CD4-positive, alpha-beta T cell (primary cell): ENCODE measurements at regions of chr2 and their contacts with region 1.

Region 1: GRCh38 chr2:158456309-158457066 is at the starts of genes CCDC148 and PKP4:
- DNase-seq: peak; percentile 71 to 97 (median 84)
- ATAC-seq: peak; percentile 90
- H3K4me3 ChIP-seq: peak within 1 kb of the TSS; percentile 76
- H3K4me3 Mint-ChIP-seq: peak within 1 kb of the TSS; percentile 99
- H3K27ac ChIP-seq: peak within 1 kb of the TSS; percentile 33 to 47
- H3K27ac Mint-ChIP-seq: peak within 1 kb of the TSS; percentile 84
- H3K4me1 ChIP-seq: peaks cover 15% of the 10 kb centered on the region
- H3K4me1 Mint-ChIP-seq: peaks cover 28% of the 10 kb centered on the region
- H3K27me3 ChIP-seq: no peaks in the 10 kb centered on the region
- H3K27me3 Mint-ChIP-seq: no peaks in the 10 kb centered on the region
- CTCF ChIP-seq: no peak
- total RNA-seq, gene CCDC148: not detected
- total RNA-seq, gene PKP4: 10.8 to 14.6 TPM

Region 2: GRCh38 chr2:159286709-159287441 is 830.4 kb after region 1 on chr2:
- CTCF ChIA-PET with region 1: no interaction called
- POLR2A ChIA-PET with region 1: no interaction called
- intact Hi-C with region 1: loop called in 1 of 2 experiments (anchors 10 kb)
- DNase-seq: peak; percentile 93 to 100 (median 97)
- ATAC-seq: peak; percentile 98
- H3K4me3 ChIP-seq: peak overlapping the region; percentile 88
- H3K4me3 Mint-ChIP-seq: peak overlapping the region; percentile 90
- H3K27ac ChIP-seq: peak overlapping the region in 1 of 2 donors; percentile 69
- H3K27ac Mint-ChIP-seq: peak overlapping the region; percentile 77
- H3K4me1 ChIP-seq: peaks cover 24% of the 10 kb centered on the region
- H3K4me1 Mint-ChIP-seq: peaks cover 46% of the 10 kb centered on the region
- H3K27me3 ChIP-seq: no peaks in the 10 kb centered on the region
- H3K27me3 Mint-ChIP-seq: no peaks in the 10 kb centered on the region
- CTCF ChIP-seq: no peak

Region 3: GRCh38 chr2:159904127-159904958 is 1447.9 kb after region 1 on chr2:
- CTCF ChIA-PET with region 1: no interaction called
- POLR2A ChIA-PET with region 1: interaction called, 3 read pairs
- intact Hi-C with region 1: loop called in 1 of 2 experiments (anchors 5 kb)
- DNase-seq: peak; percentile 64 to 91 (median 80)
- ATAC-seq: peak; percentile 81
- H3K4me3 ChIP-seq: peak within 1 kb of the TSS; percentile 97
- H3K4me3 Mint-ChIP-seq: peak within 1 kb of the TSS; percentile 99
- H3K27ac ChIP-seq: peak within 1 kb of the TSS; percentile 73 to 91
- H3K27ac Mint-ChIP-seq: peak within 1 kb of the TSS; percentile 93
- H3K4me1 ChIP-seq: peaks cover 31% of the 10 kb centered on the region
- H3K4me1 Mint-ChIP-seq: peaks cover 39% of the 10 kb centered on the region
- H3K27me3 ChIP-seq: no peaks in the 10 kb centered on the region
- H3K27me3 Mint-ChIP-seq: no peaks in the 10 kb centered on the region
- CTCF ChIP-seq: no peak